Activated B cell treated with CpG ODN at 0.5 μM for 24 hours (primary cell): ENCODE measurements at regions of chr3 and their contacts with region 1.

Region 1: GRCh38 chr3:197718880-197719279 is 17.8 kb downstream of the RUBCN start:
- DNase-seq: no peak
- ATAC-seq: no peak
- H3K4me3 Mint-ChIP-seq: no peak overlapping the region
- H3K27ac Mint-ChIP-seq: no peak overlapping the region
- H3K4me1 Mint-ChIP-seq: peaks cover 59% of the 10 kb centered on the region
- H3K27me3 Mint-ChIP-seq: no peaks in the 10 kb centered on the region
- CTCF ChIP-seq: no peak

Region 2: GRCh38 chr3:197520311-197521276 is 198.3 kb before region 1 on chr3:
- CTCF ChIA-PET with region 1: no interaction called
- POLR2A ChIA-PET with region 1: no interaction called
- intact Hi-C with region 1: no loop called
- DNase-seq: no peak
- ATAC-seq: no peak
- H3K4me3 Mint-ChIP-seq: no peak overlapping the region
- H3K27ac Mint-ChIP-seq: no peak overlapping the region
- H3K4me1 Mint-ChIP-seq: peaks cover 13% of the 10 kb centered on the region
- H3K27me3 Mint-ChIP-seq: no peaks in the 10 kb centered on the region
- CTCF ChIP-seq: no peak

Region 3: GRCh38 chr3:197674741-197675562 is 43.9 kb before region 1 on chr3:
- CTCF ChIA-PET with region 1: no interaction called
- POLR2A ChIA-PET with region 1: interaction called, 12 read pairs
- intact Hi-C with region 1: no loop called
- DNase-seq: peak; percentile 39
- ATAC-seq: peak; percentile 86
- H3K4me3 Mint-ChIP-seq: peak overlapping the region; percentile 70
- H3K27ac Mint-ChIP-seq: peak overlapping the region; percentile 70
- H3K4me1 Mint-ChIP-seq: peaks cover 43% of the 10 kb centered on the region
- H3K27me3 Mint-ChIP-seq: no peaks in the 10 kb centered on the region
- CTCF ChIP-seq: no peak

Region 4: DNA sequence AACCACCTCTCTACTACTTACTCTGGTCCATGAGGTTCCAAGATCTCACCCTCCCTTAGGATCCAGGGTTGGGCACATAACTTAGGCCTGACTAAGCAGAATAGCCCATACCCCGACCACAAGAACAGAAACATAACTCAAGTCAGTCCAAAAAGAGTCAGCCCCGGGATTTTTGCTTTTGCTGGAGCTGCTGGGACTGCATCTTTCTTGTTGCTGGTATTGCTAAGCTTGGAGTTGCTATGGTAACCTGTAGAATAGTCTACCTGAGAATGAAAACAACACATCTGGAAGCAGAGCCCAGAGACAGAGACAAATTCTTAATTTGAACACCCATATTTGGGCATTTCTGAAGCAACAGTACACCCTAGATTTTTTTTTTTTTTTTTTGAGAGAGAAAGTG is 11.3 kb after region 1 on chr3:
- CTCF ChIA-PET with region 1: no interaction called
- POLR2A ChIA-PET with region 1: interaction called, 171 read pairs
- intact Hi-C with region 1: no loop called
- DNase-seq: no peak
- ATAC-seq: no peak
- H3K4me3 Mint-ChIP-seq: no peak overlapping the region
- H3K27ac Mint-ChIP-seq: peak overlapping the region; percentile 82
- H3K4me1 Mint-ChIP-seq: peaks cover 73% of the 10 kb centered on the region
- H3K27me3 Mint-ChIP-seq: no peaks in the 10 kb centered on the region
- CTCF ChIP-seq: no peak